SK-MEL-5 (cell line): ENCODE measurements at regions of chr12 and their contacts with region 1.

Region 1: DNA sequence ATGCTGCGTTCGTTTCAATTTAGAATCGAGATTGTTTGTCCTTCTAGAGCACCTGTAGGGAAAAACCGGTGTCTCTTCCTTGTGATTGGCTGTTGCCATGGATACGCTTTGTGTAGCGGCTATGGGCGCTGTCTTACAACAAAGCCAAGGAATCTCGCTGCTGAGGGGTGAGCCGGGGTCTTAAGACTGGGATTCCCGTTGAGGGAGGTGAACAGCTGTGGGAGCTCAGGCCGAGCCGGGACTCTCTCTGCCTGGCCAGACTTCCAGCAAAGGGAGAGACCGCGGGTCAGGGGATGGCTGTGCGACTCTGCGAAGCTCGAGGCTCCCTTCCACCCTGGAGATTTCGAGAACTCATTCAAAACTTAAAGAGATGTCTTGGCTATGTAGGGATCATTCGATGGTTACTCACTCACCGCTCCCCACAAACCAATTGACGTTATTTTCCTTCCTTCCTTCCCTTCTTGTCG is at the starts of genes LRRIQ1 and TSPAN19:
- DNase-seq: peak; percentile 95
- total RNA-seq, gene LRRIQ1: 0.90 and 0.95 TPM in 2 replicates
- total RNA-seq, gene TSPAN19: 0.48 and 0.69 TPM in 2 replicates

Region 2: GRCh38 chr12:84842406-84843013 is 193.8 kb before region 1 on chr12:
- in situ Hi-C with region 1: no loop called
- DNase-seq: peak; percentile 73

Region 3: GRCh38 chr12:84889818-84890217 is 146.5 kb before region 1 on chr12:
- in situ Hi-C with region 1: loop called (anchors 10 kb)
- DNase-seq: no peak

Region 4: DNA sequence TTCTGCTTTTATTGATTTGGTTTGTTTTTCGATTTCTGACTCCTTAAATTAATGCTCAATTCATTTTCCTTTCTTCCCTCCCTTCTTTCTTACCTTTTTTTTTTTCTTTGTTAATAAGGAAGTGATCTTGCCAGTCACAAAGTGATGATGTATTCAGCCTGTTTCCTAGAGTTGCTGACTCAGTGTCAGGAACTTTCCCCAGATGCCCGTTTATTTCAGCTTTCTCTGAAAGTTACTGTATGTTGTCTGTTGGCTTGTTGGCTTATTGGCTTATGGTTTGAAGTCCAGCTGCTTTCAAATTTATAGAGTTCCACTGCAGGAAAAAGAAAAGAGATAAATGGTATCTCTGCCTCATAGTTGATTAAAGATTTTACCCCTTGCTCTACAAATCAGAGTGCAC is 111.3 kb before region 1 on chr12:
- in situ Hi-C with region 1: no loop called
- DNase-seq: peak; percentile 18